Gastrocnemius medialis (tissue), 4 donors: ENCODE measurements at regions of chr4 and their contacts with region 1.

Region 1: DNA sequence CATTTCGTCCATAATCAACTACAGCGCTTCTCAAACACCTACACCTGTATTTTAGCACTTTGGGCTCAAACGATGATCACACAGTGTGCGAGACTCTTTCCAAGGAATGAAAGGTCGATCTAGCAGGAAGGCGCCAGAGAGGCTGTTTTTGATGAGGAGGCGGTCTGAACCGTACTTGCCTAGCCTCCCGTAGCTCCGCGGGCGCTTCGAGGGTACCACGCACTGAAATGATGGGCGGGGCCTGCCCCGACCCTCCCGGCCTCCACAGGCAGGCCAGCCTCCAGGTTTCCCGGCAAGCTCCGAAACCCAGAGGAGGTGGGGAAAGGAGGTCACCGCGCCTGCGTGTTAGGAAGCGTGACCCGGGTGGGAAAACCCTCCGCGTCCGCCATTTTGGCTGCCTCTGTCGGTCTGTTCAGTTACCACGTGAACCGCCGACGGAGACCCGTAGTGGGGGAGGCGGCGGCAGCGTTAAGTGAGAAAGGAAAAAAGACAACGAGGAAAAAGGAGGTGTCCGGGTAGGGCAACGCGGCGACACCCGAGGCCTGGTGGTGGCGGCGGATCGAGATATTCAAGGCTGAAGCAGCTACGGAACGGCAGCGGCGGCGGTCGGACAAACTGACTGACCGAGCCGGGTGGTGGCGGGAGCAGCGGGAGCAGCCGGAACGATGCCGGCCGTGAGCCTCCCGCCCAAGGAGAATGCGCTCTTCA is at the start of gene NAA15:
- DNase-seq: peak; percentile 96 to 98
- ATAC-seq: peak; percentile 79 to 80
- H3K4me3 ChIP-seq: peak within 1 kb of the TSS; percentile 71 to 95 (median 86)
- H3K27ac ChIP-seq: peak within 1 kb of the TSS; percentile 94 to 98 (median 96)
- H3K4me1 ChIP-seq: peaks cover 50 to 60% of the 10 kb centered on the region in 2 donors
- H3K27me3 ChIP-seq: no peaks in the 10 kb centered on the region
- CTCF ChIP-seq: no peak
- POLR2A ChIP-seq: peak; percentile 89 to 95
- total RNA-seq, gene NAA15: 25.0 to 48.8 (median 37.2) TPM

Region 2: DNA sequence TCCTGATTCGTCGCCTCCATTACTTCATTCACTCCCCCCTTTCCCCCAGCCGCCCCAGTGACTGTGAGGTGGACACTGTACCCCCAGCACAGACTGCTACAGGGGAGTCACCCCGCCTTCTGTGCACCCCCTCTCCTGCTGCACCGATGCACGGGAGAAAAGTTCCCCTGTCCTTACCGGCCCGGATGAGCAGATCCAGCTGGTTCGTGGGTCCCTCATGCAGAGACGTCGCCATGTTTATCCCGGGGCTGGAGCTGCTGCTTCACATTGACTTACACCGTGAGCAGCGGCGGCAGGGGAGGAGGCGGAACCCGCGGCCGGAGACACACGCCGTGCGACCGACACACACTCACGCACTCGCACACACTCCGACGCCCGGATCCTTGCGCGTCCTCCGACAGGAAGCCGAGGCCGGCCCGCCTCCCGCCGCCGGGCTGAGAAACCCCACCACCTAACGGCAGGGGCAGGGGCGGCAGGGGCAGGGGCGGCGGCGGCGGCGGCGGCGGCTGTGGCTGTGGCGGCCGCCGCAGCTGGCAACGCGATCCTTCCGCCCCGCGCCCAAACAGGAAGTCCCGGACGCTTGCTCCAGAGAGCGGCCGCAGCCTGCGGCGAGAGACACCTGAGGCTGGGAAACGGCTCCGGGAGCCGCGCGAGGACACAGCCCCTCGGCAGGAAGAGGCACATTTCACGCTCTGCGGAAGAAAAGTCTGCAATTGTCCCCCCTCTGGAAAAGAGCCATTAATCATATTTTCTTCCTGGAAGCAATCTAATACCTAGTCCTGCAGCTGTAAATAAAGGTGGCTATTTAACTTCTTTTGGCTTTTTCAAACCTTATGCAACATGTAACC is 217.1 kb before region 1 on chr4:
- in situ Hi-C with region 1: loop called in 1 of 4 experiments (anchors 5 kb)
- intact Hi-C with region 1: loop called (anchors 1 kb)
- DNase-seq: peak; percentile 81 to 91
- ATAC-seq: peak; percentile 66 to 69
- H3K4me3 ChIP-seq: peak overlapping the region; percentile 65 to 90 (median 70)
- H3K27ac ChIP-seq: peak overlapping the region; percentile 92 to 98 (median 92)
- H3K4me1 ChIP-seq: peaks cover 38 to 41% of the 10 kb centered on the region in 2 donors
- H3K27me3 ChIP-seq: no peaks in the 10 kb centered on the region
- CTCF ChIP-seq: peak in 4 of 5 experiments; percentile 23 to 56 (median 48)
- POLR2A ChIP-seq: peak; percentile 37 to 58